ENCODE measurements at regions of chr20 and their contacts with region 1.

Region 1: GRCh38 chr20:23331450-23332350 is 18.9 kb upstream of the NXT1 start:
- DNase-seq: no peak
- H3K4me3 ChIP-seq: no peak overlapping the region
- H3K27ac ChIP-seq: no peak overlapping the region
- H3K4me1 ChIP-seq: no peaks in the 10 kb centered on the region
- H3K27me3 ChIP-seq: no peaks in the 10 kb centered on the region
- CTCF ChIP-seq: no peak

Region 2: GRCh38 chr20:23214903-23215302 is 116.8 kb before region 1 on chr20:
- CTCF ChIA-PET with region 1: no interaction called
- dilution Hi-C with region 1: no loop called
- in situ Hi-C with region 1: no loop called
- intact Hi-C with region 1: no loop called
- DNase-seq: no peak
- H3K4me3 ChIP-seq: no peak overlapping the region
- H3K27ac ChIP-seq: no peak overlapping the region
- H3K4me1 ChIP-seq: no peaks in the 10 kb centered on the region
- H3K27me3 ChIP-seq: no peaks in the 10 kb centered on the region
- CTCF ChIP-seq: no peak

Region 3: DNA sequence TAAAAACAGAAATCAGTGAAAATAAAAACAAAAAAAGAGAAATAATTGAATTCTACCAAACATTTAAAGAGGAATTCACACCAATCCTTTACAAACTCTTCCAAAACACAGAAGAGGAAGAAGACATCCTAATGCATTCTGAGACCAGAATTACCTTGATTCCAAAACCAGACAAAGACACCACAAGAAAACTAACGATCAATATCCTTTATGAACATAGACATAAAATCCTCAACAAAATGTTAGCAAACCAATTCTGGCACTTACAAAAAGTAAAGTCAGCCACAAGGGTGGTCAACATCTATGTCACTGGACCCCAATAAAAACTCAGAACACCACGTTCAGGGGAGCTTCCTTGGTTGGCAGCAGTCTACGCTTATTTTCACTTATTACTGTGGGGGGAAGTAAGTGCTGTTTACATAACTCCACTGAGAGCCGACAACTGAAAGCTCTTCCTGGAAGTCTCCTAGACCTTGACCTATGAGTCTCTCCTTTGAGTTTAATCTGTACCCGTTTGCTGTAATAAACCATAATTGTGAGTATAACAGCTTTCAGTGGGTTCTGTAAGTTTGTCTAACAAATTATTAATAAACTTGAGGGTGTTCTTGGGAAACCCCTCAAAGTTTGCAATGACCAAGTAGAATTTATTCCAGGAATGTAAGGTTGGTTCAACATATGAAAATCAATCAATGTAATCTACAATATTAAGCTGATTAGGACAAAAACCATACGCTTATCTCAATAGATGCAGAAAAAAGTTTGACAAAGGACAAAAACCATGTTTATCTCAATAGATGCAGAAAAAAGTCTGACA is 54.8 kb after region 1 on chr20:
- CTCF ChIA-PET with region 1: interaction called, 10 read pairs
- dilution Hi-C with region 1: no loop called
- in situ Hi-C with region 1: no loop called
- intact Hi-C with region 1: no loop called
- DNase-seq: no peak
- H3K4me3 ChIP-seq: no peak overlapping the region
- H3K27ac ChIP-seq: no peak overlapping the region
- H3K4me1 ChIP-seq: no peaks in the 10 kb centered on the region
- H3K27me3 ChIP-seq: no peaks in the 10 kb centered on the region
- CTCF ChIP-seq: no peak

Measured in mammary epithelial cell (primary cell).